ENCODE measurements at regions of chr13 and their contacts with region 1.

Region 1: DNA sequence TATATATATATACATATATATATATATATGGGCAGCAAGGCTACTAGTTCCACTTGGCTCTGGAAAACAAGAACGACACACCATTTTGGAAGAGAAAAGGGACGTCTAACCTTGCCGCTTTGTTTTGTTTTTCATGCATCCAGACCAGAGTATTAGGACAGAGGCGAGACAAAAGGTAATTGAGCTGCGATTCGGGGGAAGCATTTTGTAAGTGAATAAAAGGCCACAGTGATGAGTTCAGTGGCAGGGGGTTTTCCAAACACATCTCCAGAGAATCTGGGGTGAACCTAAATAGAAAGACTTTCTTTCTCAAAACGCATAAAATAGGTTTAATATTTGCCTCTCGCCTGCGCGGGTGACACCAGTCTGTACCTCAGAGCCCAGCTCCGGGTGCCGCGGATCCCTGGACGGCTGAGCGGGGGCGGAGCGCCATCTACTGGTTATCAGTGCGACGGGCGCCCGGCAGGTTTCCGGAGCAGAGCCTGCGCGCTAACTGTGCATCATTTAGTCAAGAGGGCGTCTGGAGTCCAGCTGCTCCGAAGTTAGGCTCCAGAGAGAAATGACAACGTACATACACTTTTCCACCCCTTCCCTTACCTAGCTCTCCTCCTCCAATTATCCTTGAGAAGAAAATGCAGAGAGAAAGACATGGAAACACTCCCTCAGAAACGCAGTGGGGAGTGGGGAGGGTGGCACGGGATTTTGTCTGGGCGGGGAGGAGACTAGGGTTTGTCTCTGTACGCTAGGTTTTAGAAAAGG is 262.3 kb downstream of the TBC1D4 start:
- DNase-seq: peak; percentile 87
- ATAC-seq: peak; percentile 98
- H3K4me3 Mint-ChIP-seq: peak overlapping the region; percentile 51
- H3K27ac Mint-ChIP-seq: no peak overlapping the region
- H3K4me1 Mint-ChIP-seq: peaks cover 5% of the 10 kb centered on the region
- H3K27me3 Mint-ChIP-seq: peaks cover 25% of the 10 kb centered on the region
- CTCF ChIP-seq: peak; percentile 94

Region 2: GRCh38 chr13:74575729-74576125 is 643.9 kb before region 1 on chr13:
- CTCF ChIA-PET with region 1: interaction called, 8 read pairs
- POLR2A ChIA-PET with region 1: no interaction called
- intact Hi-C with region 1: loop called (anchors 10 kb)
- DNase-seq: peak; percentile 69
- ATAC-seq: peak; percentile 94
- H3K4me3 Mint-ChIP-seq: peak overlapping the region; percentile 70
- H3K27ac Mint-ChIP-seq: no peak overlapping the region
- H3K4me1 Mint-ChIP-seq: peaks cover 10% of the 10 kb centered on the region
- H3K27me3 Mint-ChIP-seq: peaks cover 55% of the 10 kb centered on the region
- CTCF ChIP-seq: no peak

Region 3: GRCh38 chr13:74710006-74710405 is 509.7 kb before region 1 on chr13:
- CTCF ChIA-PET with region 1: no interaction called
- POLR2A ChIA-PET with region 1: no interaction called
- intact Hi-C with region 1: loop called (anchors 10 kb)
- DNase-seq: no peak
- ATAC-seq: no peak
- H3K4me3 Mint-ChIP-seq: no peak overlapping the region
- H3K27ac Mint-ChIP-seq: no peak overlapping the region
- H3K4me1 Mint-ChIP-seq: no peaks in the 10 kb centered on the region
- H3K27me3 Mint-ChIP-seq: no peaks in the 10 kb centered on the region
- CTCF ChIP-seq: no peak

Region 4: DNA sequence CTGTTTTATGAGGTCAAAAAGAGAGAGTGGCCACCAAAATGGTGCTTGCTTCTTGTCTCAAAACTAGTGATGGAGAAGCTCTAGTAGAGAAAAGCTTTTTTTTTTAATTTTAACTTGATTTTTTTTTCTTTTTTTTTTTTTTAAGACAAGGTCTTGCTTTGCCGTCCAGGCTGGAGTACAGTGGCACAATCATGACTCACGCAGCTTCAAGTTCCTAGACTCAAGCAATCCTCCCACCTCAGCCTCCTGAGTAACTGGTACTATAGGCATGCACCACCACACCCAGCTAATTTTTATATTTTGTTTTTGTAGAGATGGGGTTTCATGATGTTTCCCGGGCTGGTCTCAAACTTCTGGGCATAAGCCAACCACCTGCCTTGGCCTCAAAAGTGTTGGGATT is 16.7 kb before region 1 on chr13:
- CTCF ChIA-PET with region 1: interaction called, 29 read pairs
- POLR2A ChIA-PET with region 1: no interaction called
- intact Hi-C with region 1: no loop called
- DNase-seq: no peak
- ATAC-seq: no peak
- H3K4me3 Mint-ChIP-seq: no peak overlapping the region
- H3K27ac Mint-ChIP-seq: no peak overlapping the region
- H3K4me1 Mint-ChIP-seq: no peaks in the 10 kb centered on the region
- H3K27me3 Mint-ChIP-seq: peaks cover 7% of the 10 kb centered on the region
- CTCF ChIP-seq: no peak

Measured in activated CD8-positive, alpha-beta T cell treated with anti-CD3 and anti-CD28 coated beads for 36 hours (primary cell).